Activated naive CD4-positive, alpha-beta T cell treated with anti-CD3 and anti-CD28 coated beads for 36 hours (primary cell): ENCODE measurements at regions of chr14 and their contacts with region 1.

Region 1: DNA sequence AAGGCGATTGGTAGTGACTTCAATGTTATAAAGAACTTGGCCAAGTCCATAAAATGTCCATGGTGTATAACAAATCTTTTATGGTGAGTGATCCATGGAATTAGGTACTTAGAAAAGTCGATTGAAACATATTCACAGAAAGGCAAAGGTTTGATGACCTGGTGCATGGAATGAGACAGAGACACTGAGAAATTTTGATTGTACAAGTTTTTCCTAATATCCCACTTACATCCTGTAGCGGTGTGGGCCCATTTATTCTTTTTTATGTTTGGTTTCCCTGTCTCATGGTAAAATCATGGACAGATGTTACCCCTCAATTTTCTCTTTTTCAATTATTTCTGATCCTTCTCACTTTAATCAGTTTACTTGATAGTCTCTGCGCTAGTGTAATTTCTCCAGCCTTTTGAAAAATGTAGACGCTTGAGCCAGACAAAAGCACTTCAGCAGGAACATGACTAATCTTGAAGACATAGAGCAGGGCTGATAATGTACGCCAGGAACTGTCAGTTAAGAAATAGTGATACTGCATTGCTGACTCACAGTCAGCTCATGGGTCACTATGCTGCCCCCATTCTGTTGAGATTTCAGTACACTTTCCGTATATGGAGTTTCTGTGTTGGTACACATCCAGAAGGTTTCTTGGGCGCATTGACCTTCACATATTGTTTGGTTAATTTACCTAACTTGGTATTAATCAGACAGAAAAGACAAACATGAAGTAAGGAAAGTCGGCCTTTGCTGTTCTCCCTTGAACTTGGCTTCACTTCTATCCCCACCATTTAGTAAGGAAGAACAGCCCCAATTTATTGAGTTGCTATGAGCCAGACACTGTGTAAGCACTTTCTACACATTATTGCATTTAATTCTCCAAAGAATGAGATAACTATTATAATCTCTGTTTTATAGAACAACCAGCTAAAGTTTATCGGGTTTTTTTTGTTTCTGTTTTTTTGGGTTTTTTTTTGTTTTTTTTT is 841.7 kb downstream of the DIO2 start:
- DNase-seq: no peak
- H3K4me3 Mint-ChIP-seq: no peak overlapping the region
- H3K27ac Mint-ChIP-seq: no peak overlapping the region
- H3K4me1 Mint-ChIP-seq: no peaks in the 10 kb centered on the region
- H3K27me3 Mint-ChIP-seq: no peaks in the 10 kb centered on the region

Region 2: DNA sequence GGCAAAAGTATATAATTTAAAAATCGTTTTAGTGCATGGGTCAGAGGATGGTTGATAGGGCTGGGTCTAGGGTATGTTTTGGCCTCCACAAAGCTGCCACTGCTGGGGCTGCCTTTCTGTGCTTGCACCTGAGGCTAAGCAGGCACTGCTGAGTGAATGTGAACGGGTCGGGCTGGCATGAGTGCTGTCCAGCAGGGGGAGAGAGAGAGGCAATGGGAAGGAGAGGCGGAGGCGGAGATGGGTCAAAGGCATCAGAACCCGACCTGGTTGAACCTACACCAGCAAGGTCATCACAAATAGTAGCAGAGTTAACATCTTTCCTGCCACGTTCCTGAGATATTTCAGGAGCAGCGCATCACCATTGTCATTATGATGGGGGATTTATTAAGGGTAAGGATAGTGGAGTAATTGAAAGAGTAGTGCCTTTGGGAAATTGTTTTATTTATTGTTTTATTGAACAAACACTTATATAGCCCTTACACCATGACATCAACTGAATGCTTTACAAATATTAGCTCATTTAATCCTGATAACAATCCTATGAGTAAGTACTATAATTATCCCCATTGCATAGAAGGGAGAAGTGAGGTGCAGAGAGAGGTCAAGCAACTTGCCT is 1205.3 kb before region 1 on chr14:
- CTCF ChIA-PET with region 1: no interaction called
- intact Hi-C with region 1: loop called (anchors 10 kb)
- DNase-seq: peak; percentile 21
- H3K4me3 Mint-ChIP-seq: no peak overlapping the region
- H3K27ac Mint-ChIP-seq: no peak overlapping the region
- H3K4me1 Mint-ChIP-seq: no peaks in the 10 kb centered on the region
- H3K27me3 Mint-ChIP-seq: peaks cover 18% of the 10 kb centered on the region

Region 3: GRCh38 chr14:79552778-79553177 is 183.1 kb after region 1 on chr14:
- CTCF ChIA-PET with region 1: no interaction called
- intact Hi-C with region 1: no loop called
- DNase-seq: no peak
- H3K4me3 Mint-ChIP-seq: no peak overlapping the region
- H3K27ac Mint-ChIP-seq: no peak overlapping the region
- H3K4me1 Mint-ChIP-seq: no peaks in the 10 kb centered on the region
- H3K27me3 Mint-ChIP-seq: no peaks in the 10 kb centered on the region